Activated CD4-positive, alpha-beta T cell treated with anti-CD3 and anti-CD28 coated beads, Interleukin-2, amount 10 ng/mL, durations not matched to agents 7 days and 5 days (primary cell): ENCODE measurements at regions of chr2 and their contacts with region 1.

Region 1: GRCh38 chr2:7427293-7428060 is 510.3 kb downstream of the RNF144A start:
- DNase-seq: peak; percentile 61
- H3K4me3 Mint-ChIP-seq: no peak overlapping the region
- H3K27ac Mint-ChIP-seq: no peak overlapping the region
- H3K4me1 Mint-ChIP-seq: peaks cover 39% of the 10 kb centered on the region
- H3K27me3 Mint-ChIP-seq: peaks cover 3% of the 10 kb centered on the region

Region 2: DNA sequence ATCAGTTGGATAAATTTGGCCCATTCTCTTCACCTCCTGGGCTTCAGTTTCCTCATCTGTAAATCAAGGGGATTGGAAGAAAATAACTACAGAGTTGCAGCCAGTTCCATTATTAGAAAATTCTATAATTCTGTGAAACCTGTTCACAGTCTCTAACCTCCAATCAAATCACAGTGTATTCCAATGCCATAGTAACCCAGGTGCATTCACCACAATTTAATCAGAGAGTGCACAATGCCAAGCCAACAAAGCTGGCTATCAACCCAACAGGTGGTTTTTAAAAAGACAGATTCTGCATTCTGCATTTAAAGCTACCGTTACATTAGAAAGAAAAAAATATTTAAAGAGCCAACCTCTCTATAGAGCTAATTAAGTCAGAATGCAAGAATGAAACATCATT is 201.6 kb before region 1 on chr2:
- CTCF ChIA-PET with region 1: no interaction called
- POLR2A ChIA-PET with region 1: no interaction called
- DNase-seq: no peak
- H3K4me3 Mint-ChIP-seq: no peak overlapping the region
- H3K27ac Mint-ChIP-seq: no peak overlapping the region
- H3K4me1 Mint-ChIP-seq: no peaks in the 10 kb centered on the region
- H3K27me3 Mint-ChIP-seq: no peaks in the 10 kb centered on the region

Region 3: DNA sequence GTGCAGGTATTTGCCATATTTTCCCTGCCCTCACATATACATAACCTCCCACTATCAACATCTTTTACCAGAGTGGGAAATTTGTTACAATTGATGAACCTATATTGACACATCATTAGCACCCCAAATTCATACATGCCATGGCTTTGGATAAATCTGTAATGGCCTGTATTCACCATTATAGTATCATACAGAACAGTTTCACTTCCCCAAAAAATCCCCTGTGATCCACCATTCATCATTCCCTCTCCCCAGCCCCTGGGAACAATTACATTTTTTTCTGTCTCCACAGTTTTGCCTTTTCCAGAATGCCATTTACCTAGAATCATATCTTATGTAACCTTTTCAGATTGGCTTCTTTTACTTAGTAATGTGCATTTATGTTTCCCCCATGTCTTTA is 15.8 kb before region 1 on chr2:
- CTCF ChIA-PET with region 1: no interaction called
- POLR2A ChIA-PET with region 1: no interaction called
- DNase-seq: no peak
- H3K4me3 Mint-ChIP-seq: no peak overlapping the region
- H3K27ac Mint-ChIP-seq: no peak overlapping the region
- H3K4me1 Mint-ChIP-seq: no peaks in the 10 kb centered on the region
- H3K27me3 Mint-ChIP-seq: peaks cover 11% of the 10 kb centered on the region

Region 4: DNA sequence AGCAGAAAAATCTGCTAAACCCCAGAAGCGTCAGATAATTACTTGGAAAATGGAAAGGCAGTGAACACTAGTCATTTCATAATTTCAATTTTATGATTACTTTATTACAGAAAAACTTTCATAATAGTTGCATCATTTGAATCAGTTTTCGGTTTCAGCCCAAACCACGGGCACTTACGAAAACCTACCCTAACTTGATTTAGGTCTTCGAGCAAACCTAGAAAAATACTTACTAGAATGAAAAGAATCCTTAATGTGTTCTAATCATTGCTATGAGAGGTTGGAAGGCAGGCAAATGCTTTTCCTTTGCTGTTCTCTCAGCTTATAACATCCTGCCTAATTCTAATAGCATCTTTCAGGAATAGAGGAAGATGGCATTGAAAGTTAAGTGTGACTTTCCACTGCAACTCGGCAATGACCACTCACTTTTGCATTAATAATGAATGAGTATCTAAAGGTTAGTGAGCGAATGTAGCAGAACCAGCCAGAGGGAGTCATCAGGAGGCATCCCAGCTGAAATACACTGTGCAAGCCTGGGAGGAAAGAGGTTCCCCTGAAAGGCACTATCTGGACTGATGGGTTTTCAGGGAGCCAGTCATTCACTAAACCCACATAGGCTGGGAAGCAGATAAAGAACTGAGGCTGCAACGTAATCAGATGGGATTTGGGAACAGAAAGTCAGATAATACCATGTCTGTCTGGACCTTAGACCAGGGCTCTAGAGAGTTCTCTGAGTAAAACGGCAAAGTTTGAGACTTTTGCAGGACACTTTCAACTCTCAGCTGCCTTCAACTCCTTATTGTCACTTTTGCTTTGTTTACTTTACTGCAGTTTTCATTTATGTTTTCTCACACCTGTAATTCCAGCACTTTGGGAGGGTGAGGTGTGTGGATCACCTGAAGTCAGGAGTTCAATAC is 10.5 kb after region 1 on chr2:
- CTCF ChIA-PET with region 1: interaction called, 10 read pairs
- POLR2A ChIA-PET with region 1: no interaction called
- DNase-seq: no peak
- H3K4me3 Mint-ChIP-seq: no peak overlapping the region
- H3K27ac Mint-ChIP-seq: peak overlapping the region; percentile 88
- H3K4me1 Mint-ChIP-seq: peaks cover 42% of the 10 kb centered on the region
- H3K27me3 Mint-ChIP-seq: no peaks in the 10 kb centered on the region

Region 5: DNA sequence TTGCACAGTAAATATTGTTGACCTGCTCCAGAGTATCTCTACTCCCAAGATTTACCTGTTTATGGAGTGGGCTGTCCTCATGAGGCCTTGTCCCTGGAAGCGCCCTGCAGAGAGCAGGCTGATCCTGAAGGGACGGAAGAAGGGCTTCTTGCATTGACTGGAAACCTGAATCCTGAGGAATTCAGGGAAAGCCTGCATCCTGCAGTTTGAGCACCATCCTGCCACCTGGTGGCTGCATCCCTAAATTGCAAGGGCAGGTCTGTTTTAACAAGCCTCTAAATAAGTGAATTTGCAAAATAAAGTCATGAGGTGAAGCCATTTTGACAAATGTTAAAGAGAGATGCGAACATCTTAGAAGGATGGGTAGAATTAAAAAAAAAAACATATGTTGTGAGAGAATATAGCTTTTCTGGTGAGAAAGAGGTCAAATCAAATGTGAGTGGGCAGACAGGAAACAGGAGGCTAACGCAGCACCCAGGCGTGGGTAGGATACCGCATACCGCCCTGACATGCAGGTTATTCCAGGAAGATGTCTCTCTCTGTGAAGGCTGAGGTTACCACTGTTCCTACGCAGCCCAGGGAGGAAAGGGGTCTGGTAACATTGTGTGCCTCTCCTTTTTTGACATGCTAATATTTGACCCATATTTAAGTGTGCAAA is 244.7 kb after region 1 on chr2:
- CTCF ChIA-PET with region 1: interaction called, 12 read pairs
- POLR2A ChIA-PET with region 1: no interaction called
- DNase-seq: peak; percentile 48
- H3K4me3 Mint-ChIP-seq: no peak overlapping the region
- H3K27ac Mint-ChIP-seq: peak overlapping the region; percentile 84
- H3K4me1 Mint-ChIP-seq: peaks cover 31% of the 10 kb centered on the region
- H3K27me3 Mint-ChIP-seq: no peaks in the 10 kb centered on the region